Dendritic cell treated with granulocyte-macrophage colony-stimulating factor and Interleukin-4, amounts not matched to agents 40 ng/mL and 50 ng/mL, for 4 days (primary cell): ENCODE measurements at regions of chr2 and their contacts with region 1.

Region 1: DNA sequence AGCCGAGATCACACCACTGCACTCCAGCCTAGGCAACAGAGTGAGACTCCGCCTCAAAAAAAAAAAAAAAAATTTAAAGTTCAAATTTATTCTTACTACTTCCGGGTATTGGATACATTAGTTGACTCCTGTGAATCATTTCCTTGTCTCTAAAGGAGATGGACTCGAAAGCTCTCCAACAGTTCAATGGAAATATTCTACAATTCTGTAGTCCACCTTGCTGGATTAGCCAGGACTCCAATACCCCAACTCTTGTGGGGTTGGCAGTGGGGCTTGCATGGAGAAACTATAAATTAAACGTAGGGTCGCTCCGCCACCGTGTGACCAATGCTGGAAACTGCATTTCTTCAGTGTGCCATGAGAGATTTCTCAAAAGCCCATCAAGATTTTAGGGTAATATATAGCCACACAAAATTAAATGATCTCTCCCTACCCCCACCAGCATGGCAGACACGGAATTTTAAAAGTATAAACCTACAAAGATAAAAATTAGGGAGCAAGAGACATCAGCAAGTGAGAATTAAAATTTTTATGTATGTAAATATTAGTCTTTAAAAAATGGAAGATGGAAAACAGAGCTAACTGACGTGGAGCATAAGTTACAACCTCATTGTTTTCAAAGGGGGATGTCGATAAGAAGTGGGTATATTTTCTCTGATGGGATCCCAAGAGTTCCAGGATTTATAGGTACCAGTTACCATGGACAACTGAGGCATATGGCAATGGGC is 27.8 kb upstream of the GAREM2 start:
- H3K4me3 Mint-ChIP-seq: no peak overlapping the region
- H3K27ac Mint-ChIP-seq: no peak overlapping the region
- H3K4me1 Mint-ChIP-seq: peaks cover 17% of the 10 kb centered on the region
- H3K27me3 Mint-ChIP-seq: peaks cover 17% of the 10 kb centered on the region

Region 2: DNA sequence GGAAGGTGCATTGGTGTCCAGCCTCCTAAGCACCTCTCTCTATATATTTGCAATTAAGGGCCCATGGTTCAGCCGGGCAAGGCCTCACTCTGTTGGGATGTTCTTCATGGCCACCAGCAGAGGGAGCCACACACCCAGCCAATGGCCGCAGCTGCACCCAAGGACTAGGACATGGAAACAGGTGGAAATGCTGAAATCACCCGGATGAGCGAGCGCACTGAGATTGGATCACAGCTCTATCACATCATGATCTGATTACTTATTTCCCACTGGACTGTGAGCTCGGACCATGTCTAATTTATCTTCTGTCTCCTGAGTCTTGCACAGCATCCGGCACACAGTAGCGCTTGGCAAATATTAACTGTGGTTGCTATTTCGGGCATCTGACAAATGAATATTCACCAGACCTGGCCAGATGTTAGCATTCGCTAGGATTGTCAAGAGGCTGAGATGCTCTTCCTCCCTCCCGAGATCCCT is 194.0 kb before region 1 on chr2:
- intact Hi-C with region 1: loop called (anchors 1 kb)
- H3K4me3 Mint-ChIP-seq: no peak overlapping the region
- H3K27ac Mint-ChIP-seq: no peak overlapping the region
- H3K4me1 Mint-ChIP-seq: no peaks in the 10 kb centered on the region
- H3K27me3 Mint-ChIP-seq: no peaks in the 10 kb centered on the region

Region 3: DNA sequence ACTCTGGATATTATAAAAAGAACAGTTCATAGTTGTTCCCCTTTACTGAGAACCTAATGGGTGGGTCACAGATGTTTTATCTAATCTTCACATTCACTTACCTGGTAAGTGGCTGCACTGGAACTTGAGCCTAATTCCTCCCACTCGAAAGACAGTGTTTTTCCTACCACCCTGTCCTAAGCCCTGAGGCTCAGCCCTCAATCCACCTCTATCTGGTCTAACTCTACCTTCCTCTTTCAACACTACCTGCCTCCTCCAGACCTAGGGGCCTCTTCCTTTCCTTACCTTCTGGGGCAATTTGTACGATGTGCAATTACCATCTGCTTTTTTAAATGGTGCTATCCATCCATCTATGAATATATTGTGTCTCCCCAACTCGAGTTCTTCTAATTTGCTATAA is 153.2 kb before region 1 on chr2:
- intact Hi-C with region 1: loop called (anchors 1 kb)
- H3K4me3 Mint-ChIP-seq: no peak overlapping the region
- H3K27ac Mint-ChIP-seq: no peak overlapping the region
- H3K4me1 Mint-ChIP-seq: peaks cover 16% of the 10 kb centered on the region
- H3K27me3 Mint-ChIP-seq: no peaks in the 10 kb centered on the region

Region 4: GRCh38 chr2:26088032-26088643 is 57.0 kb before region 1 on chr2:
- intact Hi-C with region 1: loop called (anchors 10 kb)
- H3K4me3 Mint-ChIP-seq: no peak overlapping the region
- H3K27ac Mint-ChIP-seq: no peak overlapping the region
- H3K4me1 Mint-ChIP-seq: peaks cover 89% of the 10 kb centered on the region
- H3K27me3 Mint-ChIP-seq: no peaks in the 10 kb centered on the region

Region 5: GRCh38 chr2:26184555-26185303 is 39.6 kb after region 1 on chr2:
- intact Hi-C with region 1: no loop called
- H3K4me3 Mint-ChIP-seq: peak overlapping the region; percentile 73
- H3K27ac Mint-ChIP-seq: no peak overlapping the region
- H3K4me1 Mint-ChIP-seq: peaks cover 30% of the 10 kb centered on the region
- H3K27me3 Mint-ChIP-seq: peaks cover 51% of the 10 kb centered on the region